AG04449 (cell line): ENCODE measurements at regions of chr11 and their contacts with region 1.

Region 1: DNA sequence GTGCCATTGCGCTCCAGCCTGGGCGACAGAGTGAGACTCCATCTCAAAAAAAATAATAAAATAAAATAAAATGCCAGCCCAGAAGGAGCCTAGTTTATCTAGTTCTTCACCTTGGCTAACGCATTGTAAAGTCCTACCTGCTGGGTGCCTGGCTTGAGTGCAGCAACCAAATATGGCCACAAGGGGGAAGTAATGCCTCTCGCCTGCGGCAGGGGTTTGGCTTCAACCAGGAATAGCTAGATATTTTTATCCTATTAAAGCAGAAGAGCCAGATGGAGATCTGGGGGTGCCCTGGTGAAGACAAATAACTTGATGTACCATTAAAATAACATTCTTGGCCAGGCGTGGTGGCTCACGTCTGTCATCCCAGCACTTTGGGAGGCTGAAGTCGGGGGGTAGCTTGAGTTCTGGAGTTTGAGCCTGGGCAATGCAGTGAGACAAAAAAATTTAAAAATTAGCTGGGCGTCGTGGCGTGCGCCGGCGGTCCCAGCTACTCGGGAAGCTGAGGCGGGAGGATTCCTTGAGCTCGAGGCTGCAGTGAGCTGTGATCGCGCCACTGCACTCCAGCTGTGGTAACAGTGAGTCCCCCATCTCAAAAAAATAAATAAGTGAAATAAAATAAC is 20.6 kb upstream of the PLEKHB1 start:
- DNase-seq: no peak
- H3K4me3 ChIP-seq: peak overlapping the region; percentile 36
- CTCF ChIP-seq: peak; percentile 92

Region 2: GRCh38 chr11:73414977-73415651 is 210.7 kb before region 1 on chr11:
- CTCF ChIA-PET with region 1: interaction called, 13 read pairs
- POLR2A ChIA-PET with region 1: no interaction called
- DNase-seq: peak; percentile 95
- H3K4me3 ChIP-seq: no peak overlapping the region
- CTCF ChIP-seq: no peak

Region 3: GRCh38 chr11:73439002-73439843 is 186.6 kb before region 1 on chr11:
- CTCF ChIA-PET with region 1: no interaction called
- POLR2A ChIA-PET with region 1: no interaction called
- DNase-seq: no peak
- H3K4me3 ChIP-seq: no peak overlapping the region
- CTCF ChIP-seq: no peak

Region 4: GRCh38 chr11:73478738-73479347 is 147.0 kb before region 1 on chr11:
- CTCF ChIA-PET with region 1: interaction called, 24 read pairs
- POLR2A ChIA-PET with region 1: no interaction called
- DNase-seq: no peak
- H3K4me3 ChIP-seq: no peak overlapping the region
- CTCF ChIP-seq: peak; percentile 76

Region 5: GRCh38 chr11:73612601-73613140 is 13.1 kb before region 1 on chr11:
- CTCF ChIA-PET with region 1: interaction called, 51 read pairs
- POLR2A ChIA-PET with region 1: no interaction called
- DNase-seq: no peak
- H3K4me3 ChIP-seq: no peak overlapping the region
- CTCF ChIP-seq: no peak

Region 6: DNA sequence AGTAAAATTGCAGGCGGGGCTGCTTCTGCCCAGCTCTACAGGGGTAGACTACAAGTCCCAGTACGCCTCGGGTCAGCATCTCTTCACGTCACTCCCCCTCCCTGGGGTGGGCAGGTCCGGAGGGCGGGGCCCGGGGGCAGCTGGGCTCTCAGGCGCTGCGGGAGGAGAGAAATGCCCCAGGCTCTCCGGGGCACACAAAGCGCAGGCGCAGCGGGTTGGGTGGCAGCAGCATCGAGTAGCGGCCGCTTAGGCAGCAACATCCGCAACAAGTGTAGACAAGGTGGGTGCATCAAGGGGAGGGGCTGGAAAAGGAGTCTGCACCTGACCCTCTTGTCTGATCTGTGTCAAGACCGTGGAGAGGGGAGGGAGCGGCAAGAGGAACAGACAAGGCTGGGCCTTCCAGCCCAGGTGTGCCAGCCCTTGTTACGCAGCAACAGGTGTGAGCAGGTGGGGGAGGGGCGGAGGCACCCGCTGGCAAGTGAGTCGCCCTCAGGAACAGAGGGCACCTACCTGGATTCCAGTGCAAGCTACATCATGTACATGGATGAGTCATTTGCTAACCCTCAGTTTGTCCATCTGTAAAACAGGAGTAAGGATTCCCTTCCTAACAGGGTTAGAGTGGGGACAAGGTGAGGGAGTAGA is 21.8 kb after region 1 on chr11:
- CTCF ChIA-PET with region 1: interaction called, 72 read pairs
- POLR2A ChIA-PET with region 1: no interaction called
- DNase-seq: no peak
- H3K4me3 ChIP-seq: peak overlapping the region; percentile 39
- CTCF ChIP-seq: no peak